ENCODE measurements at regions of chr1 and their contacts with region 1.

Region 1: DNA sequence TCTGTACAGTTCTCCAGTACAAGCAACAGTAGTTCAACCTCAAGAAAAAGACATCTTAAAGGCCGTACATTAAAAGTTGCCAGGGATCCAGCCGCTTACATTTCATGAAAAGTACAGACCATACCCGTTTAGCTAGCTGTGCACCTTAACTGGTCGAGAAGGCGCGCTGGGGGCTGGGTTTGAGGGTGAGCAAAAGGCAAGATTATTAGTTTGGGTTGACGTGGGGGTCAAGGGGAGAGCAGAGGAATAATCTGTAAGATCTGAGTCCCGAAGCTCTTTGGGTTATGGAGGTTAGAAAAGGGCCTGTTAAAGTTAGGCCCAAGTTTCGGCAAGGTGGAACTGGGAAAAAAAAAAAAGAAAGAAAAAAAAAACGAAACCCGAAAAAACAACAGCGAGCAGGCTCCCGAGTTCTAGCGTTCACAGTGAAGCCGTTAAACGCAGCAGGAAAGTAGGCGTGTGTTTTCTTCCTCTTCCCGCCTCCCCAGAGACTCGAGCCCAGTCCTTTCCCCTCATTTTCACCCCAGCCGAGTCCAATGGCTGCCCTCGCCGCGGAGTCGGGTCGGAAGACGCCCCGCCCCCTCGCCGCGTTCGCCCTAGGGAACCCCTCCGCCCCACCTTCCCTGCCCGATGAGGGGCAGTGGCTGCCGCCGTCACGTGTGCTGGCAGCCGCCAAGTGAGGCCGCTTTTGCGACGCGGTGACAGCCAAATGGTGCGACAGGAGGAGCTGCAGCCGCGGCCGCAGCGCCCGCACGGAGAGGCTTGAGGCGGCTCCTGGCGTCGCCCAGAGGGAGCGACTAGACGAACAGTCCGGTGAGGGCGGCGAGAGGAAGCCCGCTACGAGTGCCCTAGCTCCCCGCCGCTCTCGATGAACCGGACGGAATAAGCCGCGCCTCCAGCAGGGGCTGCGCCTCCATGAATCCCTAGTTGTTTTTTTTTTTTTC is at the start of gene PKN2:
- DNase-seq: peak; percentile 98
- ATAC-seq: peak; percentile 96
- H3K4me3 Mint-ChIP-seq: peak within 1 kb of the TSS; percentile 84
- H3K27ac Mint-ChIP-seq: peak within 1 kb of the TSS; percentile 93
- H3K4me1 Mint-ChIP-seq: peaks cover 17% of the 10 kb centered on the region
- H3K27me3 Mint-ChIP-seq: no peaks in the 10 kb centered on the region
- total RNA-seq, gene PKN2: 23.6 to 24.4 TPM

Region 2: DNA sequence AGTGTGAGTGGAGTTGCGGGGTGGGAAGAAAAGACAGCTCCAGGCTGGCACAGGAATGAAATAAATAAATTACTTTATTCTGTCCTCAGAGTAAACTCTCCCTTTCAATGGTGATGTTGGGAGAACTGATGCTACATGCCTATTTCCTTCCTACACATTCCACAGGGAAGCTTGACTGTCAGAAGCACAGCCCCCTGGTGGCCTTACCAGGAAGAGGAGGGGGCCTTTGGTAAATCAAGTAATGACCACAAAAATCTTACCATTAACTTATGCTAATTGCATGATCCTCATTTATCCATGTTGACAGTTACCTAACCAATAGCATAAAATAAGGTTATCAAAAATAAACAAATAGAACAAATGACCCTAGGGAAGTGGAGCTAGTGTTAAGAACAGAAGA is 604.8 kb before region 1 on chr1:
- CTCF ChIA-PET with region 1: no interaction called
- POLR2A ChIA-PET with region 1: no interaction called
- DNase-seq: no peak
- ATAC-seq: no peak
- H3K4me3 Mint-ChIP-seq: no peak overlapping the region
- H3K27ac Mint-ChIP-seq: no peak overlapping the region
- H3K4me1 Mint-ChIP-seq: no peaks in the 10 kb centered on the region
- H3K27me3 Mint-ChIP-seq: no peaks in the 10 kb centered on the region

Region 3: DNA sequence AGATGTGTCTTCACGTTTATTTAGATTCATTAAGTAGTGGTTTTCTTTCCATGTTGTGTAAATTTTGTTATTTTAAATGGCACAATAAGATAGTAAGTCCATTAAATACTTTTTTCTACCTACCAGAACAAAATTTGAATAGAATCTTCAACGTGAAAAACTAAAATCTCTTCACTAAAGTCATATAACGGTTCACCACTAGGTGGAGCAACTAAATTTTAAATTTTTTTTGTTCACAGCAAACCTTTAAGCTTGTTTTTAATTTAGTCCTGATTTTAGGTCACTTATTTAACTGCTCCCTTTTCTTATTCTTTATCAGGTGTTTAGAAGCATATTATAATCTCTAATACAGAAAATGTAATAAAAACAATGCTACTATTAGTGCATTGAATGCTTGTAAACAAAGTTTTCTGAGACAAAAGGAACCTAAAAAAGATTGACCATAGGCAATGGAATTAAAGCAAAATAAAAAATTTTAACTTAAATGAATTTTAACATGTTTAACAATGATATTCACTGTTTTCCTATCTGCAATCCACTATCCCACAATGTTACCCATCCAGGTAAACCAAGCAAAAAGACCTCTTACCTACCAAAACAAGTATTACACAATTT is 28.0 kb before region 1 on chr1:
- CTCF ChIA-PET with region 1: interaction called, 37 read pairs
- POLR2A ChIA-PET with region 1: interaction called, 4 read pairs
- DNase-seq: no peak
- ATAC-seq: no peak
- H3K4me3 Mint-ChIP-seq: no peak overlapping the region
- H3K27ac Mint-ChIP-seq: no peak overlapping the region
- H3K4me1 Mint-ChIP-seq: peaks cover 12% of the 10 kb centered on the region
- H3K27me3 Mint-ChIP-seq: peaks cover 2% of the 10 kb centered on the region

Region 4: DNA sequence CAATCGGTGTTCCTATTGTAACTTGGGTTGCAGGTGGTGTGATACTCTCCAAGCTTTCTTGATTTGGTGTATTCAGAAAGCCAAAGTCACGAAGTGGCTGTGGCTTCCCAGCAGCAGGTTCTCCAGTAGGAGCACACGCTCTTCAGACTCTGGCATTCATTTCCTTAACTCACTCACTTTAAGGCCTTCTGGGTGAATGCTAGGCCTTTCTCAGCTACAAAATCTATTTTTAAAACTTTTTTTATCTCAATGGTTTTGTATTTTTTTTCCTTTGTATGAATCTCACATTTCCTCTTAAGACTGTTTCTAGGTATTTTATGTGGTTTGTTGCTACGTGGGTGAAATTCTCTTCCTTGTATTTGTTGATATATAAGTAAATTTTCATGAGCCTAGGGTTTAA is 22.6 kb before region 1 on chr1:
- CTCF ChIA-PET with region 1: interaction called, 37 read pairs
- POLR2A ChIA-PET with region 1: interaction called, 4 read pairs
- DNase-seq: peak; percentile 28
- ATAC-seq: peak; percentile 76
- H3K4me3 Mint-ChIP-seq: peak overlapping the region; percentile 64
- H3K27ac Mint-ChIP-seq: peak overlapping the region; percentile 79
- H3K4me1 Mint-ChIP-seq: peaks cover 27% of the 10 kb centered on the region
- H3K27me3 Mint-ChIP-seq: peaks cover 2% of the 10 kb centered on the region

Region 5: GRCh38 chr1:88891318-88891950 is 207.6 kb after region 1 on chr1 and contains the start of gene GTF2B:
- CTCF ChIA-PET with region 1: no interaction called
- POLR2A ChIA-PET with region 1: interaction called, 23 read pairs
- DNase-seq: peak; percentile 97
- ATAC-seq: peak; percentile 86
- H3K4me3 Mint-ChIP-seq: peak within 1 kb of the TSS; percentile 90
- H3K27ac Mint-ChIP-seq: peak within 1 kb of the TSS; percentile 90
- H3K4me1 Mint-ChIP-seq: peaks cover 43% of the 10 kb centered on the region
- H3K27me3 Mint-ChIP-seq: no peaks in the 10 kb centered on the region
- total RNA-seq, gene GTF2B: 36.5 to 38.8 TPM

Region 6: DNA sequence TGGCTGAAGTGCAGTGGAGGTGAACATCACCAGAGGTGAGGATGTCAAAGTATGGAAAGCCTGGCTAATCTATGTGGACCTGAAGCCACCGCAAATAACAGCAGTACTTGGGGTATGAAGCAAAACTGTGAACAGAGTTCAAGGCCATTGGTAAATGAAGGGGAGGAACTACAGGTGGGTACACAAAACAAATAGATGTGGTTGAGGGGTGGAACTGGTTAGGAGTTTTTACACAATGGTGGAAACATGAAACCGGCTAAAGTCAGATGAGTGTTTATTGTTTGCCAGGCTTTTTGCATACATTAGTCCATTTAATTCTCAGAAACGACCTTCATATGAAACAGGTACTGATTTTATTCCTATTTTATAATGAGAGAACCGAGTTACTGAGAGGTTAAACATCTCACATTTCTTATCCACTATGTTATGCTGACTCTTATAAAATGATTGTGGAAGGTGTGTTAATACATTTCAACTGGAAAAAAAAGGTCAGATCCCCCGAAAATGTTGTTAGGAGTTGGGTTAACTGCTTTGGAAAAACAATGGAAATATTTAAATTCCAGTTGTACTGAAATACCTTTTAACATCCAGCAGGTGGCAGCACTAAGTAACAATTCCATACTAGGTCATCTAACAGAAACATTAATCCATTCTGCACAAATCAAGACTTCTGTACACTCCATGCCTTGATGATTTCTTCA is 251.9 kb after region 1 on chr1:
- CTCF ChIA-PET with region 1: no interaction called
- POLR2A ChIA-PET with region 1: no interaction called
- DNase-seq: peak; percentile 29
- ATAC-seq: no peak
- H3K4me3 Mint-ChIP-seq: no peak overlapping the region
- H3K27ac Mint-ChIP-seq: no peak overlapping the region
- H3K4me1 Mint-ChIP-seq: peaks cover 2% of the 10 kb centered on the region
- H3K27me3 Mint-ChIP-seq: no peaks in the 10 kb centered on the region

Measured in activated CD8-positive, alpha-beta T cell treated with anti-CD3 and anti-CD28 coated beads, Interleukin-2, amount 10 ng/mL, durations not matched to agents 7 days and 5 days (primary cell).